Right ventricle myocardium superior (tissue), 1 donor: ENCODE measurements at regions of chr1 and their contacts with region 1.

Region 1: GRCh38 chr1:203117611-203118575 is 9.6 kb upstream of the ADORA1 start:
- DNase-seq: peak; percentile 87
- ATAC-seq: peak; percentile 98

Region 2: DNA sequence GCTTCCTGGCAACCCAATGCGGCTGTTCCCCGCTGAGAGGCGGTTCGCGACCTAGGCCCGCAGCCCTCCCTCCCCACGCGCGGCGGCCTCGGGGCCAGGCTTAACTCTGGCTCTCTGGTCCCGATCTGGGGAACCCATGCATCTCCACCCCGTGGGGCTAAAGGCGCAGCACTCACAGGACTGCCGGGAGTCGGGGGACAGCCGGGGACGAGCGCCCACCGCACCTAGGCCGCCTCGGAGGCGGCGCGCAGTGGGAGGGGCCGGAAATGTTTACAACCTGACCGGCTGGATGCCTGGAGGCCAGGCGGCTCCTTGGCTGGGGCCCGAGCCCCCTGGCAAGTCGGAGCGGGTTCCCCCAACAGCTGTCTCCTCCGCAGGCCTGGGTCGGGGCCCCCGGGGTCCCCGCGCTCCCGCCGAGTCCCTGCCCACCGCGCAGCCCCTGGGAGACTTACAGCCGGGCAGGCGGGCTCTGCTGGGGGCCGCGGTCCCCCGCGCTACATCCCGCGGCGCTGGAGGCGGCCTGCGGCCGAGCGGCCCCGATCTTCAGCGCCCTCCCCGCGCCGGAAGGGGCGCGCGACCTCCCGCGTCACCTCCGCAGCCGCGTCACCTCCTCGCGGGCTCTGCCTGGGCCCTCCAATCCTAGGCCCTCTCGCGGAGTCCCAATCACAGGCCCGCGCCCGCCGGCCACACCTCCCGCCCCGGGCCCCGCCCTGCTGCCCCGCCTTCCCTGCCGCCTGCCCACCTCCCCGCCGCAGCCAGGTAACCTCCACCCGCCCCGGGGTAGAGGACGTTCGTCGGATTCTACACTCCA is 160.0 kb before region 1 on chr1 and contains the start of gene ADIPOR1:
- intact Hi-C with region 1: no loop called
- DNase-seq: peak; percentile 95
- ATAC-seq: peak; percentile 99
- total RNA-seq, gene ADIPOR1: 76.6 TPM

Region 3: DNA sequence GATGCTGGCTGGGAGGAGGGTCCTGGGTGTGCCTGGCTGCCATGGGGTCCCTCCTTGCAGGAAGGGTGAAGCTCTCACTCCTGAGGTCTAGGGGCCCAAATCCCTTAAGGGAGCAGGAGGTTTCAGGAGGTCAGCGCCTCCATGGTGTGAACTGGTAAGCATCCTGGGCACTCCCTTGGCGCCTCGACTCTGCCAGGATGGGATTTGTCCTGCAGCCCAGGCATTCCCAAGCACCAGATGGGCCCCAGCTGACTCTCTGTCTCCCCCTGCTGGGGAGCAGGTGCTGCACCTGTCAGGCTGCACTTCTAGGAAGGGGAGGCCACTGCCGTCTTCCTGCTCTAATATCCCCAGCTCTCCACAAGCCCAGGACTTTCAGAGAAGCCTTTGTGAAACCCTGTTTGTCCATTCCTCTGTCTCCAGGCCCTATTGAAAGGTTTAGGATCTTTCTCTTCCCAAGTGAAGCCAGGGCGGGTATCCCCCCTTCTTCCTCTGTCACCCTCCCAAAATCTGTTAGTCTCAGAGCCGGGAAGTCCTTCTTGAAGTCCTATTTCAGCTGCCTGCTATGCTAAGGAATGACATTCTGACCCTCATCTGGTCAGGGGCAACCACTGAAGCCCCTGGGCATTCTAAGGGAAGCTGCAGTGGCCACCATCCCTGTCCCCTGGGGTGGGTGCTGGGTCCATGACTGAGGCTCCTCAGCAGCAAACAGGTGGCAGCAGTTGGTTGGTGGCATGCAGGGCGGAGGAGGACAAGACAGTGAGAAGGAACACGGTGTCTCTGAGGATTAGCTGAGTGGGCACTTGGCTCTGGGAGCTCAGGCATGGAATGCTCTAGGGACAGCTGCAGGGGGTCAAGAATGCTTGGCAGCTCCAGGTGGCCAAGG is 54.5 kb after region 1 on chr1:
- intact Hi-C with region 1: loop called (anchors 5 kb)
- DNase-seq: peak; percentile 65
- ATAC-seq: peak; percentile 81

Region 4: DNA sequence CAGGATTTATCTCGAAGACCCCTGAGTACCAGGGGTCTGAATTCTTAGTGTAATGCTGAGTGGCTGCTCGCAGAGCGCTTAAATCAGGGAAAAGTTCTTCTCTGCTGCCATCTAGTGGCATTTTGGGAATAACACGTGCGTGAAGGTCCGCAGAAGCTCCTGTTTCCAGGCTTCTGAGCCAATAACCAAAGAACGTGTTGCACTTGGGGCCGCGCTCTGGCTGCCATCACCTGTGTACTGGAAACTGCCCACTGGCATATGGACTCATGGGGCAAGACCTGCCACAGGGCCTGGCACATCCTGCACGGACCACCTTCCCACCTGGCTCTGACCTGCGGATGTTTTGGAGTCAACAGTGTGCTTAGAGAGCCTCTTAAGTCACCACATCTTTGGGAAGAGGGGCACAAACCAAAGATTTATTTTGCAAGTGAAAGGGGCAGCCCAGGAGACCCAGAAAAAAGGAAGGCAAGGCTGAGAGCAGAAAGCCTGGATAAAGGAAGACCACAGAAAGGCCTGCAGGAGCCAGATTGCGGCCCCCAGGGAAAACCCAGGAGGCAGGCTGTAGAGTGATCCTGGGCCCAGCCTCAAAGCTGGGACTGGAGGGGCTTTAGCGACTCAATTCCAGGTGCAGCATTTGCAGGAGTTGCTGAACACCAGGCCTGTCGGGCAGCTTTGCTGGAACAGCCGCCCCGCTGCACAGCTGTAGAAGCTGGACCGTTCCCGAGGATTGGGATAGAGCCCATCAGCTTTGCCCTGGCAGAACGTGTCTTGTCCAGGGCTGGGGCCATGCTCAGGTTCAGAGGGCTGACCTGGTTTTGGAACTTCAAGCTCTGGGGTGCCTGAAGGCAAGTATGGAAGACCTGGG is 98.6 kb after region 1 on chr1:
- intact Hi-C with region 1: loop called (anchors 2 kb)
- DNase-seq: no peak
- ATAC-seq: peak; percentile 92